ENCODE measurements at regions of chr6 and their contacts with region 1.

Region 1: GRCh38 chr6:195861-196360 is 96.4 kb upstream of the DUSP22 start:
- DNase-seq: peak; percentile 39
- H3K4me3 Mint-ChIP-seq: no peak overlapping the region
- H3K27ac Mint-ChIP-seq: peak overlapping the region; percentile 17
- H3K4me1 Mint-ChIP-seq: peaks cover 45% of the 10 kb centered on the region
- H3K27me3 Mint-ChIP-seq: peaks cover 3% of the 10 kb centered on the region

Region 2: DNA sequence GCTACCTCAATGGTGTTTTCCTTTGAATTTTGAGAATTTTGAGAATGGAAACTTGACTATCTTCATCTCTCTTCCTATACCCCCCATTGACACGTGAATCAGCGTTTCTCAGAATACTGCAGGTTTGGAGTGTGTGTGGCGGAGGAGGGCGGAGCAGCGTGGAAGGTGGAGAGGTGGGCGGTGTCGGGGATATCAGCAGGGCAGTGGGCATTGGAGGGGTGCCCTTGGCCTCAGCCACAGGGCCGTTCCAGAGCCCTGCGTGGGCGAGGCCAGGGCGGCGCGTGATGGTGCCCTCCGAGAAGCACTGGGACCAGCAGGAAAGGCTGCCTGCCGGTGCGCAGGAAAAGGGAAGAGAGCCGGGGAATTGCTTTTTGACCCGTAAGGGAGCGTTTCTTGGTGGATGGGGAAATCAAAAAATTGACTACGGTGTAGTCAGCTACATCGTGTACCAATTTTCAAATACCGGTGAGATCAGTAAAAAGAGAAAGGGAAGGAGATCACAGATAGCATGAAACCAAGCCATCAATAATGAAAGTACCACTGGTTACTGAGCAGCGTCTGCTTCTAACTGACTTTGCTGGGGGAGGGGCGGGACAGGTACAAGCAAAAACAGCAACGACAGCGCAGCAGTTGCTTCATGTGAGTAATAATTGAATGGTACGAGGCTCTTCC is 13.7 kb after region 1 on chr6:
- intact Hi-C with region 1: loop called (anchors 1 kb)
- DNase-seq: peak; percentile 46
- H3K4me3 Mint-ChIP-seq: peak overlapping the region; percentile 6
- H3K27ac Mint-ChIP-seq: no peak overlapping the region
- H3K4me1 Mint-ChIP-seq: peaks cover 33% of the 10 kb centered on the region
- H3K27me3 Mint-ChIP-seq: peaks cover 2% of the 10 kb centered on the region

Region 3: GRCh38 chr6:219641-220198 is 23.8 kb after region 1 on chr6:
- intact Hi-C with region 1: loop called (anchors 1 kb)
- DNase-seq: no peak
- H3K4me3 Mint-ChIP-seq: no peak overlapping the region
- H3K27ac Mint-ChIP-seq: no peak overlapping the region
- H3K4me1 Mint-ChIP-seq: peaks cover 69% of the 10 kb centered on the region
- H3K27me3 Mint-ChIP-seq: no peaks in the 10 kb centered on the region

Region 4: DNA sequence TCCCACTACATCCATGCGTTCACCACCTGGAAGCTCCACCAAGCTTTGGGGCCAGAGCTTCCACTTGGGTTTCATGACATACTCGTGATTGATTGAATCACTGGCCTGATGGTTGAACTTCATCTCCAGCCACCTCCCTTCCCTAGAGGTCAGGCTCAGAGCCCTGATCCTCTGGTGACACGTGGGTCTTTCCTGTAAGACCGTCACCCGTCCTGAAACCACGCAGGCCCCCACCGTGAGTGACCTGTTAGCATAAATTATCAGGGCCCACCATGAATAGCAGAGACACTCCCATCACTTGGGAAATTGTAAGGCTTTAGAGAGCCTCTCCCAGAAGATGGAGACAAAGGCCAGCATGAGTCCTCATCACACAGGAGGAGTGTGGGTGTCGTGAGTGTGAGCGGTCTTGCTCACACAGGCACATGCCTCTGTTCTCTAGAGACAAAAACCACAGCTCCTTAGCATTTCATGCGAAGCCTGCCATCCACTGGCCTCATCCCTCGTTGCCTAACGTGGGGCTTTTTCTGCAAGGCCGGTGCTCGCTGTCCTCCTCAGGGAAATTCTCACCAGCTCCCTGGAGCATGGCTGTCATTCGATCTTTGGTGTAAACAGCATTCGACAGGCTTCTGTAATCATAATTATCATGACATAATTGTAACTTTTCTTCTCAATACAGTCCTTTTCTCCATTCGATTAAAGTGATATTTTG is 31.3 kb after region 1 on chr6:
- intact Hi-C with region 1: loop called (anchors 1 kb)
- DNase-seq: no peak
- H3K4me3 Mint-ChIP-seq: no peak overlapping the region
- H3K27ac Mint-ChIP-seq: peak overlapping the region; percentile 28
- H3K4me1 Mint-ChIP-seq: peaks cover 76% of the 10 kb centered on the region
- H3K27me3 Mint-ChIP-seq: no peaks in the 10 kb centered on the region

Region 5: GRCh38 chr6:235763-236360 is 40.0 kb after region 1 on chr6:
- intact Hi-C with region 1: loop called (anchors 1 kb)
- DNase-seq: peak; percentile 37
- H3K4me3 Mint-ChIP-seq: peak overlapping the region; percentile 60
- H3K27ac Mint-ChIP-seq: peak overlapping the region; percentile 82
- H3K4me1 Mint-ChIP-seq: peaks cover 43% of the 10 kb centered on the region
- H3K27me3 Mint-ChIP-seq: no peaks in the 10 kb centered on the region

Region 6: DNA sequence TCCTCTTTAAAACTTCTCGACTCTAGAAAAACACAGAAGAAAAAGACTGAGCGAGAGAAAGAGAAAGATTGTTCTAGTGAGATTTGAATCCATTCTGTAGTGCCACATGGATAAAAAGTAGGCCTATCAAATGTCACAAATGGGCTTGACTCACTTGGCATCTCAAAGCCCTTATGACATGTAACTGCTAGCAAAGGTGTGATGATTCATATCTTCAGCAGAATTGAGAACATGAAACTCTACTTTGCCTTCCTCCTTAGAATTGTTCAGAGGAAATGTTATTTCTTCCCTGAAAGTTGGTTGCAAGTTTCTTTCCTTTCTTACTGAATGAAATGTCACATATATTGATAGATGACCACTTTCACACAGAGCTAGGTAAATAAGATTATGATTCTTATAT is 56.0 kb after region 1 on chr6:
- intact Hi-C with region 1: loop called (anchors 1 kb)
- DNase-seq: no peak
- H3K4me3 Mint-ChIP-seq: no peak overlapping the region
- H3K27ac Mint-ChIP-seq: peak overlapping the region; percentile 56
- H3K4me1 Mint-ChIP-seq: peaks cover 34% of the 10 kb centered on the region
- H3K27me3 Mint-ChIP-seq: peaks cover 2% of the 10 kb centered on the region

Region 7: GRCh38 chr6:336159-337019 is 140.5 kb after region 1 on chr6:
- intact Hi-C with region 1: loop called (anchors 1 kb)
- DNase-seq: peak; percentile 23
- H3K4me3 Mint-ChIP-seq: peak overlapping the region; percentile 35
- H3K27ac Mint-ChIP-seq: peak overlapping the region; percentile 74
- H3K4me1 Mint-ChIP-seq: peaks cover 55% of the 10 kb centered on the region
- H3K27me3 Mint-ChIP-seq: no peaks in the 10 kb centered on the region

Measured in activated T-helper 2 cell treated with anti-CD3 and anti-CD28 coated beads, Interferon-gamma antibody, Interleukin-2, Interleukin-4, amounts not matched to agents 10 μg/mL and 5 μg/mL and 100 μg/mL, durations not matched to agents 14 hours and 24 hours and 36 hours (primary cell).